ENCODE measurements at regions of chr12 and their contacts with region 1.

Region 1: DNA sequence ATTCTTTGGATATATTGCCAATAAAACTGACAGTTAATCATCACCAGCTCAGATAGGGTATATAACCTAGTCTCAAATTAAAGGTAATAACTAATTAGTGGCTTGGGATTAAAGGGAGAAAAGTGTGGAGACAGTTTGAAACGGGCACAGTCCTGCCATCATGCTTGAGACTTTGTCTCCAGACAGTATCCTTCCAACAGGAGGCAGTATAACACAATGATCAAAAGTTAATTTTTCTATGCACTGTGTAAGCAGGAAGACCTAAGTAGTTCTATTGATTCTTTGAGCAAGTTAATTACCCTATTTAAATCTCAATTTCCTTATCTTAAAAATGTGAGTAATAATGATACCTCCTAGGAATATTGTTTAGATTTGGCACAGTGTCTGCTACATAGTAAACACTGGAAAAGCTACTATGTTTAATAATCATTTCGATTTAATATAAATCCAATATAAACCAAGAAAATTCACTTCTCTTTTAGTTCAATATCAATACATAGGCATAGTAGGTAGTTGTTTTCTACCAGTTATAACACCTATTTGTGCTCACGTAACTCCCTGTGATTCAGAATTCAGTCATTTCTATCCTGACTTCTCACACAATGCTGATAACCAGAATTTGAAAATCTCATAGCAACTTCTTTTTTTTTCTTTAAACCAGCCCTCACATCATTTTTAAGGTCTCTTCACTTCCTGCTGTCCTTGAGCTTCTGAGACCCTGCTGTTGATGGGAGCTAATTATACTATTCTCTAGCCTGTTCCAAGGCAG is 53.7 kb downstream of the GALNT4 start:
- DNase-seq: no peak
- ATAC-seq: peak; percentile 45
- H3K4me3 Mint-ChIP-seq: peak overlapping the region; percentile 26
- H3K27ac Mint-ChIP-seq: peak overlapping the region; percentile 78
- H3K4me1 Mint-ChIP-seq: peaks cover 77% of the 10 kb centered on the region
- H3K27me3 Mint-ChIP-seq: no peaks in the 10 kb centered on the region

Region 2: GRCh38 chr12:89040146-89040964 is 430.6 kb before region 1 on chr12:
- CTCF ChIA-PET with region 1: interaction called, 31 read pairs
- POLR2A ChIA-PET with region 1: interaction called, 12 read pairs
- DNase-seq: peak; percentile 93
- ATAC-seq: peak; percentile 98
- H3K4me3 Mint-ChIP-seq: peak overlapping the region; percentile 37
- H3K27ac Mint-ChIP-seq: peak overlapping the region; percentile 91
- H3K4me1 Mint-ChIP-seq: peaks cover 67% of the 10 kb centered on the region
- H3K27me3 Mint-ChIP-seq: no peaks in the 10 kb centered on the region

Region 3: DNA sequence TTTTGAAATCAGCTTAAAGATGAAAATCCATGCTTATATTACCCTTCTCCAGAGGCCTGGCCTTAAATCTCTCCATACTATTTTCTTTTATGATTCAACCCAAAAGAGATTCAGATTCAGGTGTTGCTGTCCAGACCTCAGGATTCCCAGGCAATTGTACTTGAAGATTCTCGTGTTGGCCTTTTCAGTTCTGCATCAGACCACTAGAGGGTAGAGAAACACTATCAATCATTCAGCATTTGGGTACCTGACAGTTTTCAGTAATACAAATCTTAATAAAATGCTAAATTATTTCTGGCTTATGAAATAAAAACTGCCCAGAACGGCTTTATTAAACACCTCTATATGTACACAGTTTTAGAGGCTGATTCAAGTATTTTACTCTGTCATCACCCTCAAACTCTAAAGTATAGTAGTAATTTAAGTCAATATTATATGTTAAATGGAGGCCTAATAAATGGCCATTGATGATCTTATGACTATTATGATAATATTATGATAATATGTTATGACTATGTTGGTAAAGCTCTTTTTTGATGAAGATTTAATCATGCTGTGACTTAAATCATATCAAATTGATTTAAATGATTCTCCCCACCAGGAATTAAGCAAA is 419.8 kb before region 1 on chr12:
- CTCF ChIA-PET with region 1: interaction called, 21 read pairs
- POLR2A ChIA-PET with region 1: no interaction called
- DNase-seq: peak; percentile 55
- ATAC-seq: peak; percentile 77
- H3K4me3 Mint-ChIP-seq: no peak overlapping the region
- H3K27ac Mint-ChIP-seq: no peak overlapping the region
- H3K4me1 Mint-ChIP-seq: peaks cover 32% of the 10 kb centered on the region
- H3K27me3 Mint-ChIP-seq: no peaks in the 10 kb centered on the region

Region 4: DNA sequence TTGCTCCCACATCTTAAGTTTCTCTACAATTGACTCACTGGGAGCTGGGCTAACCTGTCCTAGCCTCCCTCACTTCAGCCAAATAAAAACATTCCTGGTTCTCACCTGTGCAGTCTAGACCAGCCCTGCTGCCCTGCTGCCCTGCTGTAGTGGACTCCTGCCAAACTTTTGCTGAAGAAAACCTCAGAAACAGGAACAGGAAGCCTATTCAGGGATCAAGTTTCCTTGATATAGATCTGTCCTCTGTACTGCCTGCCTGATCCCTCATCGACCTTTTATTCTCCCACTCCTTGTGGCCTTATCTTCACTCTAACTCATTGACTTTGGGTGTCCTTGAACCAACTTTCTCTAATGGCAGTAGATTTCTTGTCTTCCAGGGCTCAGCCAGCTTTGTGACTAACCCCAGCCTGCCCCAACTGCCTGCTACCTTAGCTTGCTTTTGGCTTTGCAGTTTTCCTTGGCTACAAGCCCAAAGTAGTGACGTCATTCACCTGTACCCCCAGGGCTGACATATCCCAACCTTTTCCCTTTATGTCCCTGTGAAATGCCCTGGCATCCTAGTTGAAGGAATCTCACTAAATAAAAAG is 353.4 kb before region 1 on chr12:
- CTCF ChIA-PET with region 1: no interaction called
- POLR2A ChIA-PET with region 1: no interaction called
- DNase-seq: no peak
- ATAC-seq: no peak
- H3K4me3 Mint-ChIP-seq: no peak overlapping the region
- H3K27ac Mint-ChIP-seq: no peak overlapping the region
- H3K4me1 Mint-ChIP-seq: peaks cover 6% of the 10 kb centered on the region
- H3K27me3 Mint-ChIP-seq: no peaks in the 10 kb centered on the region

Region 5: DNA sequence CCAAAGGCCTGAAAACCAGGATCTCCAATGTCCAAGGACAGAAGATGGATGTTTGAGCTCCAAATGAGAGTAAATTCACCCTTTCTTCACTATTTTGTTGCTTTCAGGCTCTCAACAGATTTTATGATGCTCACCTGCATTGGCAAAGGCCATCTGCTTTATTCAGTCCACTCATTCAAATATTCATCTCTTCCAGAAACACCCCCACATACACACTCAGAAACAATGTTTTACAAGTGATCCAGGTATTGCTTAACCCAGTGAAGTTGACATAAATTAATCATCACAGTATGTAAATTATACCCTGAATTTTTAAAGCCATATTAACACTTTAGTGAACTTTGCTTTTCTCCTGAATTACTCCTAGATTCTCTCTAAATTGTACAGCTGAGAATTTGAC is 182.0 kb before region 1 on chr12:
- CTCF ChIA-PET with region 1: no interaction called
- POLR2A ChIA-PET with region 1: no interaction called
- DNase-seq: no peak
- ATAC-seq: no peak
- H3K4me3 Mint-ChIP-seq: no peak overlapping the region
- H3K27ac Mint-ChIP-seq: no peak overlapping the region
- H3K4me1 Mint-ChIP-seq: no peaks in the 10 kb centered on the region
- H3K27me3 Mint-ChIP-seq: no peaks in the 10 kb centered on the region

Region 6: GRCh38 chr12:89494411-89495231 is 23.7 kb after region 1 on chr12:
- CTCF ChIA-PET with region 1: interaction called, 11 read pairs
- POLR2A ChIA-PET with region 1: no interaction called
- DNase-seq: no peak
- ATAC-seq: peak; percentile 58
- H3K4me3 Mint-ChIP-seq: no peak overlapping the region
- H3K27ac Mint-ChIP-seq: peak overlapping the region; percentile 43
- H3K4me1 Mint-ChIP-seq: peaks cover 17% of the 10 kb centered on the region
- H3K27me3 Mint-ChIP-seq: no peaks in the 10 kb centered on the region

Region 7: DNA sequence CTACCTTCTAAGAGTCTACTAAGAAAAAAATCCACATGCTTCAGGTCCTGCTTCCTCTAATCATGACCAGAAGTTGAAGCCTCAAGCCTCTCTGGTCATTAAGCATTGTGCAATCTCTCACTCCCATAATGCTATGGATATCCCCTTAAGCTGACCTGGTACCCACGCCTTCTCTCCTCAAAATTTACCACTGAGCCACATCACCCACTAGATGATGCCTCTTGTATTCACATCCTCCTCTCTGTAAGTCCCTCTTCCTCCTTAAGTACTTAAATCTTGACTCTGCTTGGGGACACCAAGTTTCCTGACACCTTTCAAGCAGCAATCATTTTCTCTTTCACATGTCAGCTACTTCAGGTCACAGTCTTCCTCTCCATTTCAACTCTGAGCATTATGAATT is 43.8 kb after region 1 on chr12:
- CTCF ChIA-PET with region 1: interaction called, 13 read pairs
- POLR2A ChIA-PET with region 1: no interaction called
- DNase-seq: peak; percentile 25
- ATAC-seq: peak; percentile 74
- H3K4me3 Mint-ChIP-seq: no peak overlapping the region
- H3K27ac Mint-ChIP-seq: no peak overlapping the region
- H3K4me1 Mint-ChIP-seq: peaks cover 32% of the 10 kb centered on the region
- H3K27me3 Mint-ChIP-seq: no peaks in the 10 kb centered on the region

Region 8: DNA sequence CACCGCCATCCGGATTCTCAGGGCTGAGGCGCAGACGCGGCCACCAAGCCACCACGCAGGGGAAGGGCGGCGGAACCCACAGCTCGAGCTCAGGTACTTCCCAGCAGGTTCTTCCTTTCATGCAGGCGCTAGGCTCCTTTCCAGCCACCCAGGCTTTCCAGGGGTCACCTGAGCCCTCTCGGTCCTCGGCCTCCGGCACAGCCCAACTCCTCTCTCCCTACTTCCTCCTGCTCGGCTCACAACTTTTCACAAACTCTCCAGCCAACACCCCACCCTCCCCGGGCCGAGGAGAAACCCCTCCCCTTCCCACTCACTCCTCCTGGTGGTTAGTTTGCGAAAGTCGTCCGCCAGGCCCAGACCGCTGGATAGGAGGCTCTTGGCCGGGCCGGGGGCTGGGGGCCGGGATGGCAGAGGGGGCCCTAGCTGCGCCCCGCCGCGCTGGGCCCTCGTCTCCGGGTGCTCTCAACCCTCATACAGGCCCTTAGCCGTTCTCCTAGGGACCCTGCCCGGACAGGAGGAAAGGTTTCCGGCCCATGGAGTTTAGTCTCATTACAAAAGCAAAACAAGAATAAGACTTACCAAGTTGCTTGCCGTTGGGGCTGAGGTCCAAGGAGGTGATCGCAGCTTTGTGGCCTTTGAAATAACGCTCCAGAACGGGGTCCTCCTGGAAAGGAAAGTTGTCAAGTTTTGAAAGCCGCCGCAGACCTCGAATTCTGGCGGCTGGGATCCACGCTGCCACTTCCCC is 53.8 kb after region 1 on chr12 and contains the start of gene GALNT4:
- CTCF ChIA-PET with region 1: interaction called, 180 read pairs
- POLR2A ChIA-PET with region 1: interaction called, 33 read pairs
- DNase-seq: peak; percentile 86
- ATAC-seq: peak; percentile 78
- H3K4me3 Mint-ChIP-seq: peak within 1 kb of the TSS; percentile 89
- H3K27ac Mint-ChIP-seq: peak within 1 kb of the TSS; percentile 98
- H3K4me1 Mint-ChIP-seq: peaks cover 73% of the 10 kb centered on the region
- H3K27me3 Mint-ChIP-seq: no peaks in the 10 kb centered on the region
- total RNA-seq, gene GALNT4: 15.4 to 16.6 TPM